ENCODE measurements at regions of chr7 and their contacts with region 1.

Region 1: GRCh38 chr7:150988230-150989226 is 2.3 kb upstream of the NOS3 start:
- DNase-seq: peak; percentile 61
- H3K4me3 ChIP-seq: no peak overlapping the region
- H3K27ac ChIP-seq: peak overlapping the region in 3 of 4 donors; percentile 2 to 57 (median 27)
- H3K4me1 ChIP-seq: peaks cover 6 to 19% (median 12%) of the 10 kb centered on the region in 4 donors
- H3K27me3 ChIP-seq: peaks cover 7% of the 10 kb centered on the region
- CTCF ChIP-seq: peak; percentile 85 to 92 (median 88)
- EP300 ChIP-seq: no peak
- POLR2A ChIP-seq: no peak

Region 2: GRCh38 chr7:150648353-150649079 is 340.0 kb before region 1 on chr7:
- in situ Hi-C with region 1: no loop called
- intact Hi-C with region 1: no loop called
- DNase-seq: no peak
- H3K4me3 ChIP-seq: no peak overlapping the region
- H3K27ac ChIP-seq: no peak overlapping the region
- H3K4me1 ChIP-seq: no peaks in the 10 kb centered on the region
- H3K27me3 ChIP-seq: no peaks in the 10 kb centered on the region
- CTCF ChIP-seq: no peak
- EP300 ChIP-seq: no peak
- POLR2A ChIP-seq: no peak

Region 3: GRCh38 chr7:150778738-150779301 is 209.7 kb before region 1 on chr7:
- in situ Hi-C with region 1: loop called (anchors 5 to 25 kb)
- intact Hi-C with region 1: loop called (anchors 5 kb)
- DNase-seq: peak; percentile 91
- H3K4me3 ChIP-seq: no peak overlapping the region
- H3K27ac ChIP-seq: peak overlapping the region in 3 of 4 donors; percentile 28 to 35 (median 32)
- H3K4me1 ChIP-seq: peaks cover 3 to 42% (median 12%) of the 10 kb centered on the region in 4 donors
- H3K27me3 ChIP-seq: no peaks in the 10 kb centered on the region
- CTCF ChIP-seq: peak; percentile 88 to 95 (median 89)
- EP300 ChIP-seq: no peak
- POLR2A ChIP-seq: no peak

Region 4: GRCh38 chr7:150891740-150892139 is 96.8 kb before region 1 on chr7:
- in situ Hi-C with region 1: loop called (anchors 5 to 25 kb)
- intact Hi-C with region 1: no loop called
- DNase-seq: no peak
- H3K4me3 ChIP-seq: no peak overlapping the region
- H3K27ac ChIP-seq: no peak overlapping the region
- H3K4me1 ChIP-seq: no peaks in the 10 kb centered on the region
- H3K27me3 ChIP-seq: peaks cover 3% of the 10 kb centered on the region
- CTCF ChIP-seq: no peak
- EP300 ChIP-seq: no peak
- POLR2A ChIP-seq: no peak

Region 5: DNA sequence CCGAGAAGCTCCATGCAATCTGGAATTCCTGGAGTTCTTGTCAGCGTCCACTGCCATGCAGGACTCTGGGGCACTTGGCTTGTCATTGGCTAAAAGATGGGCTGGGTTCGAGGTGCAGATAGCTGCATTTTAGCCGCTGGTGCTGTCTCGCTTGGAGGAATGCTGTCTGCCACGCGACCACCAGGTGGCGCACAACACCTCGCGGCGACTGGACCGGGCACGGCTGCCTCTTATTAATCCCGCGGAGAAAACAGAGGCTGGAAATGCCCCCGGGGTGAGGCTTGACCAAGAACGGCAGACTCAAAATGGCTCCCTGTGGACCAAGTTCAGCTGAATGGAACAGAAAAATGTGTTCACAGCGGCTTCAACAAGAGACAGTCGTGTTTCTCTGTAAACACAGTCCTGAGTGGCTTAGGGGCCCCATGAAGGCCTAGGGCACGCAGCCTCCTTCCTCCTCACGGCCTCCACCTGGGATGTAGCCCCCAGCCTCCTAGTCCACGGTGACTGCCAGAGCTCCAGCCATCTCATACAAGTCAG is 90.0 kb before region 1 on chr7:
- in situ Hi-C with region 1: loop called (anchors 5 to 25 kb)
- intact Hi-C with region 1: loop called (anchors 1 kb)
- DNase-seq: peak; percentile 85
- H3K4me3 ChIP-seq: no peak overlapping the region
- H3K27ac ChIP-seq: peak overlapping the region in 2 of 4 donors; percentile 5 to 62
- H3K4me1 ChIP-seq: peaks cover 19 to 43% (median 34%) of the 10 kb centered on the region in 4 donors
- H3K27me3 ChIP-seq: peaks cover 5% of the 10 kb centered on the region
- CTCF ChIP-seq: peak; percentile 92 to 97 (median 95)
- EP300 ChIP-seq: no peak
- POLR2A ChIP-seq: no peak

Region 6: DNA sequence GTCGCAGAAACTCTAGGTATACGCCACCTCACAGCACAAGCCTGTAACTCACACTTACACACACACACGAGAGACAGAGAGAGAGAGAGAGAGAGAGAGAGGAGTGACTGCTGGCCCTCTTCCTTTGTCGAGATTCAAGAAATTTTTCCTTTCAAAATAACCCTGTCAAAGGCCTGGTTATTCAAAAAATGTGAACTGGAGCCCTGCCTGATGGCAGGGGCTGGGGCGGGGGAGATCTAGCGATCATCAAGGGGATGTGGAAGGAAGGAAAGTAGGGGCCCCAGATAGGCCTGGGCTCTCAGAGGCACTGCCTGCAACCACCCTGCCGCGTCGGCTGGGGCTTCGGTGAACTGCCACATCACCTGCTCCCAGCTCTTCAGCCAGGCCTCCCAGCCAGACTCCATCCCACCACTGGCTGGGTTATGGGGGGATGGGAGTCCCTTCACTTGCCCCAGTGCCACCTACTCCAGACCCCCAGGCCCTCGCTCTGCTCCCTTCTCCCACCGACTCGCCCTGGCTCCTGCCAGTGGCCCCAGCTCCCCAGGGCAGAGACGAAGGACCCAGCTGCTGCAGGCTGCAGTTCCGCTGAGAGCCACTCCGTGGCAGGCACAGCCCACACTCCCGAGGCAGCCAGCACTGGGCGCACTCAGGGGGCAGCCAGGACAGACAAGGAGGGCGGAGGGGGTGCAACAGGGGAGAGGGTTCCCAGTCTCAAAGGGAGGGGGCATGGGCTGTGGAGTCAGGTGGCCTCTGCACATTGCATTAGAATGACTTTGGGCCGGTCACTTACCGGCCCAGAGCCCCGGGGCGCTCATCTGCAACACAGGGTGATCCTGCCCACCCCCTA is 25.8 kb before region 1 on chr7:
- in situ Hi-C with region 1: no loop called
- intact Hi-C with region 1: loop called (anchors 2 kb)
- DNase-seq: peak; percentile 60
- H3K4me3 ChIP-seq: no peak overlapping the region
- H3K27ac ChIP-seq: peak overlapping the region; percentile 70 to 94 (median 76)
- H3K4me1 ChIP-seq: peaks cover 12 to 45% (median 28%) of the 10 kb centered on the region in 4 donors
- H3K27me3 ChIP-seq: peaks cover 11% of the 10 kb centered on the region
- CTCF ChIP-seq: peak; percentile 91 to 96 (median 92)
- EP300 ChIP-seq: no peak
- POLR2A ChIP-seq: no peak

Region 7: GRCh38 chr7:151143261-151144015 is 154.9 kb after region 1 on chr7:
- in situ Hi-C with region 1: no loop called
- intact Hi-C with region 1: no loop called
- DNase-seq: peak; percentile 4
- H3K4me3 ChIP-seq: no peak overlapping the region
- H3K27ac ChIP-seq: no peak overlapping the region
- H3K4me1 ChIP-seq: no peaks in the 10 kb centered on the region
- H3K27me3 ChIP-seq: no peaks in the 10 kb centered on the region
- CTCF ChIP-seq: no peak
- EP300 ChIP-seq: no peak
- POLR2A ChIP-seq: no peak

Measured in transverse colon (tissue), 4 donors.